Ascending aorta (tissue), 2 donors: ENCODE measurements at regions of chr1 and their contacts with region 1.

Region 1: DNA sequence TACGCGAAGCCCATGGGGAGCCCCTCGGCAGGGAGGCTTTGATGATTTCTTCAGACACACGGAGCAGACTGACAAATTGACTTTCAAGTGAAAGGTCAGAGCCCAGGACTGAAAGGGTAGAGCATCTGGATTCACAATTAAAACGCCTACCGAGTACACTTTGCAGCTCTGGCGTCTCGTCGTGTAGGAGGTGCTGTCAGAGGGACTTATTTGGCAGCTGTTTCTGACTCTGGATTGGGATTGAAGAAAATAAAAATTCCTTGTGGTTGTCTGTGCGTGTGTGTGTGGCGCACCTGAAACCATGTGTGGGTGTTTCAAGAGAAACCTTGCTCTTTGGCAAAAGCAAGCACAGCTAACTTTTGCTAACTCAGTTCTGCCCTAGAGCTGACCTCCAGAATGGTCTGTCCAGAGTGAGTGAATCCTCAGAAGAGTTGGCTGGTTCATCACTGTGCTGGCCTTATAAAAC is 348.7 kb downstream of the HLX start:
- DNase-seq: no peak
- H3K4me3 ChIP-seq: no peak overlapping the region
- H3K27ac ChIP-seq: no peak overlapping the region
- H3K4me1 ChIP-seq: peaks cover 0 to 8% of the 10 kb centered on the region in 2 donors
- H3K27me3 ChIP-seq: no peaks in the 10 kb centered on the region
- CTCF ChIP-seq: no peak

Region 2: GRCh38 chr1:221166559-221167318 is 61.2 kb before region 1 on chr1:
- intact Hi-C with region 1: no loop called
- DNase-seq: no peak
- H3K4me3 ChIP-seq: no peak overlapping the region
- H3K27ac ChIP-seq: no peak overlapping the region
- H3K4me1 ChIP-seq: no peaks in the 10 kb centered on the region
- H3K27me3 ChIP-seq: no peaks in the 10 kb centered on the region
- CTCF ChIP-seq: no peak

Region 3: GRCh38 chr1:221187174-221187573 is 40.7 kb before region 1 on chr1:
- intact Hi-C with region 1: no loop called
- DNase-seq: no peak
- H3K4me3 ChIP-seq: no peak overlapping the region
- H3K27ac ChIP-seq: no peak overlapping the region
- H3K4me1 ChIP-seq: no peaks in the 10 kb centered on the region
- H3K27me3 ChIP-seq: no peaks in the 10 kb centered on the region
- CTCF ChIP-seq: no peak

Region 4: GRCh38 chr1:221419513-221420088 is 191.7 kb after region 1 on chr1:
- intact Hi-C with region 1: loop called (anchors 10 kb)
- DNase-seq: no peak
- H3K4me3 ChIP-seq: no peak overlapping the region
- H3K27ac ChIP-seq: no peak overlapping the region
- H3K4me1 ChIP-seq: no peaks in the 10 kb centered on the region
- H3K27me3 ChIP-seq: no peaks in the 10 kb centered on the region
- CTCF ChIP-seq: no peak